ENCODE measurements at regions of chr15 and their contacts with region 1.

Region 1: DNA sequence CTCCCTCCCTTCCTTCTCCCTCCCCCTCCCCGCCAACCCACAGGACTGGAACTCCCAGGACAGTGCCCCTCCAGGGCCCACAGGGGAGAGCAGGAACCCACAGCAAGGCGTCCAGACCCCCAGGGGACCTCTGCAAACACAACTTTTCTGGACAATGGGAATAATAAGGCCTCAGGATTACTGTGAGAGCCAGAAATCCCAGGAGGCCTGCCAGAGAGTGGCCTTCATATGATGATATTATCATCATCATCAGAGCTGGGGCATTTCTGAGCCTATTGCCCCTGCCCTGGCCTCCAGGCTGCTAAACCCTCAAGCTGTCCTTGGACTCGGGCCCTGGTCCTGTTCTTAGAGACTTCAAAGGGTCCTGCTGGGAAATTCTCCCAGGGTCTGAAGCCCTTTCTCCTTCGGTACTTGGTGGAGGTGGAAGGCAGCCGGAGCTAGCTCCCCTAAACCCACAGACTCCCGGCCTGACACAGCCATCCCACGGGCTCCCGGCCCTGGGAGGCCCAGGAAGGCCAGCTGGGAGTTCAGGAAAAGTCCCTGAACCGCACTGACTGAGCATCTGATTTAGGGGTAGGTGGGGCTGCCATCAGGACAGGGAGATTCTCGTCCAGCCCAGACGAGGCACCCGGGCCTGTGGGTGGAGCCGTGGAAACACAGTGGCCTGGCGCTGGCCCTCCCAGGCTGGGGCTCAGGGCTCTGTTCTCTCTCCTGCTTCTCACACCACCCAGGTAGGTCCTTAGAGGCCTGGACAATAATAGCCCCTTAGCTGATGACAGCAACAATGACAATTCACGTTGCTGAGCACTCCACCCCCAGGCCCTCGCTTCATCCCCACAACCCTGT is 4.9 kb downstream of the CALML4 start:
- DNase-seq: peak; percentile 57
- H3K4me3 ChIP-seq: no peak overlapping the region
- H3K27ac ChIP-seq: 0 out of 4 replicates have a peak overlapping the region, but pooled peaks of 1 of the 2 experiments have one; percentile 3
- H3K4me1 ChIP-seq: peaks cover 0 to 25% of the 10 kb centered on the region in 2 experiments; a peak in 1 of 4 replicates
- H3K27me3 ChIP-seq: no peaks in the 10 kb centered on the region
- CTCF ChIP-seq: no peak
- EP300 ChIP-seq: no peak
- RAD21 ChIP-seq: no peak

Region 2: GRCh38 chr15:68175526-68175925 is 24.7 kb before region 1 on chr15:
- CTCF ChIA-PET with region 1: no interaction called
- POLR2A ChIA-PET with region 1: no interaction called
- DNase-seq: no peak
- H3K4me3 ChIP-seq: no peak overlapping the region
- H3K27ac ChIP-seq: no peak overlapping the region
- H3K4me1 ChIP-seq: peaks cover 0 to 2% of the 10 kb centered on the region in 2 experiments; a peak in 1 of 4 replicates
- H3K27me3 ChIP-seq: no peaks in the 10 kb centered on the region
- CTCF ChIP-seq: no peak
- EP300 ChIP-seq: no peak
- RAD21 ChIP-seq: no peak

Region 3: DNA sequence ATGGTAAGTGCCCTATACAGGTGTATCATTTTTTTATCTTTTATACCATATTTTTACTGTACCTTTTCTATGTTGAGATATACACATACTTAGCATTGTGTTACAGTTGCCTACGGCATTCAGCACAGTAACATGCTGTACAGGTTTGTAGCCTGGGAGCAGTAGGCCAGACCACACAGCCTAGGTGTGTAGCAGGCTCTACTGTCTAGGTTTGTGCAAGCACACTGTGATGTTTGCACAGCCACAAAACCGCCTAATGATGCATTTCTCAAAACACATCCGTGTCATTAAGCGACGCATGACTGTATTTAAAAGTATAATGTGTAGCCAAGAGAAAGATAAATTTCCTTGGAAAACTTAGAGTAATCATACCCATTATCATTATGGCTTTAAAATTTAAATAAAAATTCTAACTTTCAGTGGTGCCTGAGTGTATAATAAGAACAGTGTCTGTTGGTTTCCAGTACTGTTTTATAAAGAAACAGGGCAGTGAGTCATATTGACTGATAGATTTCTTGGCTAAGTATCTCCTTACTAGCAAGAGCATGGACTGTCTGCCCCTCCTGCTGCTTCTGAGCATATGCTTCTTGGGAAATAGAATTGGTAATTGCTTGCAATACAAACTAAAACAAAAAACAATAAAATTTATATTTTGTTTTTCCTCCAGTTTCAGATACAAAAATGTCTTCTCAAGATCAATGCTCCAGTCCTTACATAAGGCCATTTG is 13.4 kb before region 1 on chr15:
- CTCF ChIA-PET with region 1: interaction called, 11 read pairs
- POLR2A ChIA-PET with region 1: no interaction called
- DNase-seq: no peak
- H3K4me3 ChIP-seq: no peak overlapping the region; a peak in 1 of 4 replicates
- H3K27ac ChIP-seq: peak overlapping the region; percentile 72 to 94
- H3K4me1 ChIP-seq: peaks cover 20 to 24% of the 10 kb centered on the region in 2 experiments
- H3K27me3 ChIP-seq: no peaks in the 10 kb centered on the region
- CTCF ChIP-seq: no peak
- EP300 ChIP-seq: no peak
- RAD21 ChIP-seq: no peak

Region 4: DNA sequence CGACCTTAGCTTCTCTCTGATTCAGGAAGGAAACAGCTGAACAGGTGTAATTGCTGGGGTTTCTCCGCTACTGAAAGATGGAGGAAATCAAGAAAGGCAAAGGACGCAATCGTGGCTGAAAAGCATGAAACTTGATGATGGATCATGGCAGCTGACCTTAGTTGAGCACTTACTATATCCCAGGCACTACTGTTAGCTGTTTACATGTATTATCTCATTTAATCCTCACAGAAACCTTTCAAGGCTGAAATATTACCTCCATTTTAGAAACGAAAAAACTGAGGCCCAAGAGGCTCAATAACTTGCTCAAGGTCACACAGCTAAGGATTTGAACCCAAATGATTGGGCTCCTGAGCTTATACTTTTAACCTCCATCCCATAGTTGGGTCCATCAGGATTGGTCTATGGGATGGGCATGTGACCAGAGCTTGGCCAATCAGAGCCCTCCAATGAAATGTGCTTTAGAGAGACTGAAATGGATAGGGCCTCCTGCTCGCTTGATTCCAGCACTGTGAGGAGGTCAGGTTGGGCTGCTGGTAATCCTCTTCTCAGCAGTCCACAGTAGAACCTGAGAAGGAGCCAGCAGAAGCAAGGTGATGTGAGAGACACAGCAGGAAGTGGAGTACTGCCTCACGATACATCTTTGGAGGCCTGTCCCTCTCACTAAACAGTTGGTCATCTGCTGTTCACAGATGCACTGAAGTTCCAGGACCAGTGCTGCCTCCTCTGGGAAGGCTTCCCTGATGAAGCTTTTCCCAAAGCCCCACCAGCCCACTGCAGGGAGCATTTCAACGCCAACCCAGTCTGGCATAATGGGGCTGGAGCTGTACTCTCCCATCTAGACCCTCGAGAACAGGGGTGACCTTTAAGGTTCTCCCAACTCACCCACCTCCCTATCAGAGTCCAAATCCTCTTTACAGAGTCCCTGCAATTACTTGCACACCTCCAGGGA is 18.9 kb after region 1 on chr15:
- CTCF ChIA-PET with region 1: no interaction called
- POLR2A ChIA-PET with region 1: no interaction called
- DNase-seq: peak; percentile 10
- H3K4me3 ChIP-seq: no peak overlapping the region
- H3K27ac ChIP-seq: no peak overlapping the region
- H3K4me1 ChIP-seq: no peaks in the 10 kb centered on the region
- H3K27me3 ChIP-seq: no peaks in the 10 kb centered on the region
- CTCF ChIP-seq: no peak
- EP300 ChIP-seq: no peak
- RAD21 ChIP-seq: no peak

Measured in SK-N-SH (cell line).